ENCODE measurements at regions of chr22 and their contacts with region 1.

Region 1: GRCh38 chr22:37244114-37244921 is at the start of gene RAC2:
- DNase-seq: peak; percentile 97
- ATAC-seq: peak; percentile 60
- H3K4me3 Mint-ChIP-seq: peak within 1 kb of the TSS; percentile 100
- H3K27ac Mint-ChIP-seq: peak within 1 kb of the TSS; percentile 98
- H3K4me1 Mint-ChIP-seq: peaks cover 49% of the 10 kb centered on the region
- H3K27me3 Mint-ChIP-seq: no peaks in the 10 kb centered on the region
- total RNA-seq, gene RAC2: 834 to 907 TPM

Region 2: DNA sequence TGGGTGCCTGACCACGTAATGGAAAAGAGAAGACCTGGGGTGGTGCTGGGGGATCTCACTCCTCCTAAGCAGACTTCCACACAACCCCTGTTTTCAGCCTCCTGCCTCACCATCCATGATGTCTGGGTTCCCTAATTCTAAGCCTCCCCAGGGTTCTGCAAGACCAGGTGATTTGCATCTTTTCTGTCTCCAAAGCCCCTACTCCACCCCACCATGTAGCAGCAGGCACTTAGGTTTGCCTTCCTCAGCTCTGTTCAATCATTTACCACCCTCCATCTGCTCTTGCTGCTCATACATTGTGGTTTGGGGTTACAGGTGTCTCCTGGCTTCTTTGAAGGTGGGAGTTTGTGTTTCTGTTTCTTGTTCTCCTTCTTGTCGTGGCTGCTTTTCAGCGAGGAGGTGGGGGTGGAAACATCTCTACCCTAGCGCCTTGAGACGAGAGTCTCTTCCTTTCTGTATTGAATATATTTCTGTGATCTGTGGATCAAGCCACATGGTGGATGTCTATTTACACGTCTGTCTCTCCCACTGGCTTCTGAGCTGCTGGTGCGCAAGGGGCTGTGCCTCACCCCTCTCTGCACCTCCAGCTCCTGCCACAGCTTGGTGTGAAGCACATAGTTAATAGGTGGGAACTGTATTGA is 25.4 kb before region 1 on chr22:
- CTCF ChIA-PET with region 1: interaction called, 13 read pairs
- DNase-seq: peak; percentile 82
- ATAC-seq: peak; percentile 59
- H3K4me3 Mint-ChIP-seq: peak overlapping the region; percentile 71
- H3K27ac Mint-ChIP-seq: peak overlapping the region; percentile 92
- H3K4me1 Mint-ChIP-seq: peaks cover 74% of the 10 kb centered on the region
- H3K27me3 Mint-ChIP-seq: no peaks in the 10 kb centered on the region

Region 3: DNA sequence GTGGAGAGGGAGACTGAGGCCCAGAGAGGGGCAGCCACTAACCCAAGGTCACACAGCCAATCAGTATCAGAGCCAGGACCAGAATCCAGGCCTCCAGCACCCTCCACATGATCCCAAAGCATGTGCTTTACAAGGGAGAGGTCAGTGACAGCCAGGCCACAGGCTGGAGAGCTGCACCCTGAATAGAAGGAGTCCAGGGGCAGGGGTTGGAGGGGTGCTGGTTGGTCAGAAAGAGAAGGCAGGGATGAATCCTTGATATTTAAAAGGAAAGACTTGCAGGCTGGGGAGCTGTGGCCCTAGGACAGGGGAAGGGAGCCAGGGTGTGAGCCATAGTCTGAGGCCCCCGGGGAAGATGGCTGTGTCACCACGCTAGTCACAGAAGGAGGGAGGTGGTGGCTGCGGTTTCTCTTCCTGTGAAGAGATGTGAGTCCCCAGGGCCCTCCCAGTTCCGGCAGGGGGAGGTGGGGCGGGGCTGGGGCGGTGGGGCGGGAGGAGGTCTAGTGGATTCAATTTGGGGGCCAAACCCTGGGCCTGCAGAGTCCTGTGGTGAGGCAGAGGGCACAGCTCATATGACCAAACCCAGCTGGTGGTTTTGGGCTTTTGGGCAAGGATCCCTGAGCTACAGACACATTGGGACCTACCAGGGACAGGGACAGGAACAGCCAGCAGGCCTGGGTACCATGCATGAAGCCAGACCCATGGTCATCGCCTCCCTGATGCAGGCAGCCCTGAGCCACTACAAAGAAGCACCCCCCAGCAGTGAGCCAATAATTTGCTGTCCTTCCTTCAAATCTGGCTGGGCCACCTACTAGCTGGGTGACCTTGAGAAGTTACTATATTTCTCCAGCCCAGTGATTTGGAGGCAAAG is 14.3 kb before region 1 on chr22:
- CTCF ChIA-PET with region 1: interaction called, 112 read pairs
- DNase-seq: peak; percentile 97
- ATAC-seq: peak; percentile 77
- H3K4me3 Mint-ChIP-seq: peak overlapping the region; percentile 57
- H3K27ac Mint-ChIP-seq: peak overlapping the region; percentile 97
- H3K4me1 Mint-ChIP-seq: peaks cover 90% of the 10 kb centered on the region
- H3K27me3 Mint-ChIP-seq: no peaks in the 10 kb centered on the region

Region 4: DNA sequence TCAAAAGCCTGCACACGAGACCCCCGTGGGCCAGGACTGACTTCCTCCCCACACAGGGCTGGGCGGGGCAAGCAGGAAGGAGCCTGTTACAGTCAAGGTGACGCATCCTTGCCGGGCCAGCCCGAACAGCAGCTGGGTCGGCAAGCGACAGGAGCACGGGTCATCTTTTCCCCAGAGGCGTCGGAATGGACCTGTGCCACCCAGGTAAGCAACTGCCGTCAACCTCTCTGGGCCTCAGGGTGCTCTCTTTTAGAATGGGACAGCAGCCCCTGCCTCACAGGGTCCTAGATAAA is 38.0 kb after region 1 on chr22 and contains the start of gene CYTH4:
- CTCF ChIA-PET with region 1: interaction called, 10 read pairs
- DNase-seq: peak; percentile 90
- ATAC-seq: peak; percentile 90
- H3K4me3 Mint-ChIP-seq: peak within 1 kb of the TSS; percentile 100
- H3K27ac Mint-ChIP-seq: peak within 1 kb of the TSS; percentile 98
- H3K4me1 Mint-ChIP-seq: peaks cover 58% of the 10 kb centered on the region
- H3K27me3 Mint-ChIP-seq: no peaks in the 10 kb centered on the region
- total RNA-seq, gene CYTH4: 97.8 to 123 TPM